ENCODE measurements at regions of chr3 and their contacts with region 1.

Region 1: GRCh38 chr3:106333911-106334618 is 465.3 kb upstream of the CBLB start:
- DNase-seq: peak; percentile 86
- ATAC-seq: peak; percentile 76
- H3K4me3 Mint-ChIP-seq: peak overlapping the region; percentile 73
- H3K27ac Mint-ChIP-seq: peak overlapping the region; percentile 98
- H3K4me1 Mint-ChIP-seq: peaks cover 81% of the 10 kb centered on the region
- H3K27me3 Mint-ChIP-seq: no peaks in the 10 kb centered on the region
- CTCF ChIP-seq: no peak

Region 2: GRCh38 chr3:105827959-105828358 is 506.1 kb before region 1 on chr3:
- CTCF ChIA-PET with region 1: no interaction called
- POLR2A ChIA-PET with region 1: interaction called, 6 read pairs
- intact Hi-C with region 1: loop called (anchors 10 kb)
- DNase-seq: peak; percentile 32
- ATAC-seq: no peak
- H3K4me3 Mint-ChIP-seq: peak overlapping the region; percentile 35
- H3K27ac Mint-ChIP-seq: peak overlapping the region; percentile 100
- H3K4me1 Mint-ChIP-seq: peaks cover 85% of the 10 kb centered on the region
- H3K27me3 Mint-ChIP-seq: no peaks in the 10 kb centered on the region
- CTCF ChIP-seq: no peak

Region 3: DNA sequence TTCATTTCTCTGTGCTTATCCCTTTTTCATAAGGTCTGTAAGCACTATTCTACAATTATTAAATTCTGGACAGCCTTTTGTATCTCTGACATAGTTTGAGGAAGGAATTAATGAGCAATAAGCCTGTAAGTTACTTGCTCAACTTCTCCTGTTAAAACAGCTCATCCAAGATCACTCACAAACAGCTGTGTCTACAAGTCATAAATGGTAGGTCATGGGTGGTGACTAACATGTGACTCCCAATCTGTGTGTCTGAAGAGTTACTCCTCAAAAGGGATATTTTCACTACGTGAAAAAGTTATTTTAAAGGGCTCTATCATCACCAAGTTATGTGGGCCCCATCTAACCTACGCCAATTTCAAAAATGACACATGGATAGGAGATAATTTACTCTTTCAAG is 320.1 kb before region 1 on chr3:
- CTCF ChIA-PET with region 1: no interaction called
- POLR2A ChIA-PET with region 1: no interaction called
- intact Hi-C with region 1: loop called (anchors 5 kb)
- DNase-seq: peak; percentile 25
- ATAC-seq: peak; percentile 40
- H3K4me3 Mint-ChIP-seq: no peak overlapping the region
- H3K27ac Mint-ChIP-seq: peak overlapping the region; percentile 47
- H3K4me1 Mint-ChIP-seq: peaks cover 46% of the 10 kb centered on the region
- H3K27me3 Mint-ChIP-seq: no peaks in the 10 kb centered on the region
- CTCF ChIP-seq: no peak

Region 4: DNA sequence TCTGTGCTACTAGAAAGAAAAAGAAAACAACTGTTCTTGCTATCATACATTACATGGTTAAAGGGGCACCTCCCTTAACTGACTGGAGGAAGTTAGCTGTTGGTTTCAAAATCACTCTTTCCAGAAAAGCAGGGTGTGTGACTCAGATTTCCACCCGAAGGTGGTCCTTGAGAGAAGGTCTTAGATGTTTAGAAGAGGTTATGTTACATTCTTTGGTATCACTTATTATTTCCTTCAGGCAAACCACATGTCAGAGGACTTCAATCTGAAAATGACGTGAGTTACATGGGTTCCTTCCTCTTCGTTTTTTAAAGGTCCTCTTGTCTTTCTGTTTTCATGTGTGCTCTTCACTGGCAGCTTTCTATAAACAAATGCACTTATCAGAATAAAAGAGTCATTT is 157.3 kb before region 1 on chr3:
- CTCF ChIA-PET with region 1: no interaction called
- POLR2A ChIA-PET with region 1: no interaction called
- intact Hi-C with region 1: loop called (anchors 2 kb)
- DNase-seq: peak; percentile 82
- ATAC-seq: peak; percentile 88
- H3K4me3 Mint-ChIP-seq: peak overlapping the region; percentile 38
- H3K27ac Mint-ChIP-seq: peak overlapping the region; percentile 88
- H3K4me1 Mint-ChIP-seq: peaks cover 76% of the 10 kb centered on the region
- H3K27me3 Mint-ChIP-seq: no peaks in the 10 kb centered on the region
- CTCF ChIP-seq: no peak

Region 5: DNA sequence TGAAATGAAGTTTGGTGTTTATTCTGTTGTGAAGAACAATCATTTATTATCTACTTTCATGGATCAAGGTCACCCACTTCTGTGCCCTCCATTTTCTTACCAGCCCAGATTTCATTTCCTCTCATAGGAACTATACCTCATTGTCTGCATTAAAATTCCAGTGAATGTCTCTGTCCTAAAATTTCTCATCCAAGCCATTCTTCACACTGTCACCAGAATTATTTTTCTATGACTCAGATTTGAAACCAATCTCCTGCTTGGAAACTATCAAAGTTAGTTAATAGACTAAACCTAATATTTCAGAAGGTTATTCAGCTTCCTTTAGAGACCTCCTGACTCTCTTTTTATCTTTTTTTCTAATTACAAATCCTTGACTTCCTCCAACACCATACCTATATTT is 101.1 kb before region 1 on chr3:
- CTCF ChIA-PET with region 1: no interaction called
- POLR2A ChIA-PET with region 1: no interaction called
- intact Hi-C with region 1: loop called (anchors 5 kb)
- DNase-seq: no peak
- ATAC-seq: no peak
- H3K4me3 Mint-ChIP-seq: no peak overlapping the region
- H3K27ac Mint-ChIP-seq: no peak overlapping the region
- H3K4me1 Mint-ChIP-seq: peaks cover 48% of the 10 kb centered on the region
- H3K27me3 Mint-ChIP-seq: no peaks in the 10 kb centered on the region
- CTCF ChIP-seq: no peak

Region 6: DNA sequence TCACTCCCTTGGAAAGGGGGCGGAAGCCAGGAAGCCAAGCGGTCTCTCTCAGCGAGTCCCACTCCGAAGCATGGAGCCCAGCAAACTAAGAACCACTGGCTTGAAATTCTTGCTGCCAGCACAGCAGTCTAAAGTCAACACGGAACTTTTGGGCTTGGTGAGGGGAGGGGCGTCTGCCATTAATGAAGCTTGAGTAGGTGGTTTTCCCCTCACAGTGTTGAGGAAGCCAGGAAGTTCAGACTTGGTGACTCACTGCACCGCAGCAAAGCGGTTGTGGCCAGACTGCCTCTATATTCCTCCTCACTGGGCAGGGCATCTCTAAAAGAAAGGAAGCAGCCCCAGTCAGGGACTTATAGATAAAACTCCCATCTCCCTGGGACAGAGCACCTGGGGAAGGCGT is 200.1 kb after region 1 on chr3:
- CTCF ChIA-PET with region 1: no interaction called
- POLR2A ChIA-PET with region 1: no interaction called
- intact Hi-C with region 1: no loop called
- DNase-seq: peak; percentile 77
- ATAC-seq: peak; percentile 96
- H3K4me3 Mint-ChIP-seq: no peak overlapping the region
- H3K27ac Mint-ChIP-seq: peak overlapping the region; percentile 58
- H3K4me1 Mint-ChIP-seq: peaks cover 19% of the 10 kb centered on the region
- H3K27me3 Mint-ChIP-seq: no peaks in the 10 kb centered on the region
- CTCF ChIP-seq: no peak

Region 7: GRCh38 chr3:106609666-106610301 is 275.7 kb after region 1 on chr3:
- CTCF ChIA-PET with region 1: interaction called, 3 read pairs
- POLR2A ChIA-PET with region 1: interaction called, 3 read pairs
- intact Hi-C with region 1: loop called (anchors 5 kb)
- DNase-seq: peak; percentile 73
- ATAC-seq: peak; percentile 79
- H3K4me3 Mint-ChIP-seq: no peak overlapping the region
- H3K27ac Mint-ChIP-seq: peak overlapping the region; percentile 0
- H3K4me1 Mint-ChIP-seq: peaks cover 21% of the 10 kb centered on the region
- H3K27me3 Mint-ChIP-seq: peaks cover 2% of the 10 kb centered on the region
- CTCF ChIP-seq: peak; percentile 86

Measured in activated CD8-positive, alpha-beta T cell treated with anti-CD3 and anti-CD28 coated beads for 36 hours (primary cell).